ENCODE measurements at regions of chr21 and their contacts with region 1.

Region 1: GRCh38 chr21:38355992-38356797 is 99.4 kb downstream of the KCNJ15 start:
- DNase-seq: peak; percentile 84
- H3K4me3 Mint-ChIP-seq: no peak overlapping the region
- H3K27ac Mint-ChIP-seq: no peak overlapping the region
- H3K4me1 Mint-ChIP-seq: peaks cover 16% of the 10 kb centered on the region
- H3K27me3 Mint-ChIP-seq: peaks cover 2% of the 10 kb centered on the region

Region 2: GRCh38 chr21:37711836-37712568 is 644.2 kb before region 1 on chr21:
- CTCF ChIA-PET with region 1: interaction called, 5 read pairs
- intact Hi-C with region 1: loop called (anchors 5 kb)
- DNase-seq: peak; percentile 74
- H3K4me3 Mint-ChIP-seq: no peak overlapping the region
- H3K27ac Mint-ChIP-seq: no peak overlapping the region
- H3K4me1 Mint-ChIP-seq: no peaks in the 10 kb centered on the region
- H3K27me3 Mint-ChIP-seq: peaks cover 29% of the 10 kb centered on the region

Region 3: GRCh38 chr21:38170280-38170679 is 185.9 kb before region 1 on chr21:
- CTCF ChIA-PET with region 1: interaction called, 55 read pairs
- intact Hi-C with region 1: loop called (anchors 1 kb)
- DNase-seq: peak; percentile 41
- H3K4me3 Mint-ChIP-seq: no peak overlapping the region
- H3K27ac Mint-ChIP-seq: no peak overlapping the region
- H3K4me1 Mint-ChIP-seq: no peaks in the 10 kb centered on the region
- H3K27me3 Mint-ChIP-seq: no peaks in the 10 kb centered on the region

Region 4: DNA sequence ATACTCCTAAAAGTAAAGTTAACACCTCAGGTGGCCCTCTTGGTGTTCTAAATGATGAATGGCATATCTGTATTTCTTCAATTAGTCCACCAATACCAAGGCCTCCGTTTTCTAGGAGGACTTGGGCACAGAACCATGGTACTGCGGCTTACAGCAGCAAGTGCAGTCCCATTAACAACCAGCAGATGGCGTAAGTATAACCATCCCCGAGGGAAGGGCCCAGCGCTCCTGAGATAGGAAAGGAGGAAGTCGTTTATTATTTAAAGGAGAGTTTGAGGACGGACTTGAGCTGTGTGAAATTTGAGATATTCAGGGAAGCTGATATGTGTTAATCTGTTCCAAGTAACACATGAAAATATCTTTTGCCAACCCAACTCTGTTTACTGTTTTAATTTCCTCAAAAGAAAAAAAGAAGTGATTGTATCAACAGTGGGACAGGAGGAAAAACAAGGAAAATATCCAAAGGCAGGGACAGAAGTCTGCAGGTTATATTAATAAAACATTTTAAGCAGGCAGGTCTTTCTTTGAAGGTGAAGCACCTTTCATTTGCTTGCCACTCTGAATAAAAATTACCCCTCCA is 137.1 kb before region 1 on chr21:
- CTCF ChIA-PET with region 1: interaction called, 127 read pairs
- intact Hi-C with region 1: loop called (anchors 1 kb)
- DNase-seq: peak; percentile 78
- H3K4me3 Mint-ChIP-seq: no peak overlapping the region
- H3K27ac Mint-ChIP-seq: no peak overlapping the region
- H3K4me1 Mint-ChIP-seq: peaks cover 3% of the 10 kb centered on the region
- H3K27me3 Mint-ChIP-seq: no peaks in the 10 kb centered on the region

Region 5: DNA sequence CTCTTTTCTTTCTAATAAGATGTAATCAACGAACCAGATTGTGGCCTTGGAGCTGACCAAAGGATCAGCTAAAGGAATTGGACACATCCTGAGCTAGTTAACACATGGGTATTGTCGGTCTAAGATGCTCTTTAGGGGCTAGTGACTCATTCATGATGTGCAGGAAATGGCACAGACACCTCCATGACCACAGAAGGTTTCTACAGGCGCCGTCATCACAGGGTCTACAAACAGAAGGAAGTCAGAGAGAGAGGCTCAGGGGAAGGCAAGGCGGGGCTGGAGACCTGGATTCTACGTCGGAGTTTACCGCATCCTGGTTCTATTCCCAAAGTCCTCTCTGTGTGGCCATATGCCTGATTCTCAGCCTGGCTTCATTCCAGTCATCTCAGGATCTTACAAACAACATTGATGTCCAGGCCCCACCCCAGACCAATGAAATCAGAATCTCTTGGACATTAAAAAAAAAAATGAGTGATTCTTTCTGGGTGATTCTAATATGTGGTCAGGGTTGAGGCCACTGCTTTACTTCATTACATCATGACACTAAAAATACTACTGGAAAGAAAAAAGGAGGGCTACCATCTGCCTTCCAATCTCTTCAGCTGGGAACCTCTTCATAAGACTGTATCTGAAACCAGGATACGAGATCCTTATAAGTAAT is 111.2 kb before region 1 on chr21:
- CTCF ChIA-PET with region 1: interaction called, 10 read pairs
- intact Hi-C with region 1: no loop called
- DNase-seq: peak; percentile 89
- H3K4me3 Mint-ChIP-seq: peak overlapping the region; percentile 10
- H3K27ac Mint-ChIP-seq: peak overlapping the region; percentile 87
- H3K4me1 Mint-ChIP-seq: peaks cover 41% of the 10 kb centered on the region
- H3K27me3 Mint-ChIP-seq: no peaks in the 10 kb centered on the region

Region 6: DNA sequence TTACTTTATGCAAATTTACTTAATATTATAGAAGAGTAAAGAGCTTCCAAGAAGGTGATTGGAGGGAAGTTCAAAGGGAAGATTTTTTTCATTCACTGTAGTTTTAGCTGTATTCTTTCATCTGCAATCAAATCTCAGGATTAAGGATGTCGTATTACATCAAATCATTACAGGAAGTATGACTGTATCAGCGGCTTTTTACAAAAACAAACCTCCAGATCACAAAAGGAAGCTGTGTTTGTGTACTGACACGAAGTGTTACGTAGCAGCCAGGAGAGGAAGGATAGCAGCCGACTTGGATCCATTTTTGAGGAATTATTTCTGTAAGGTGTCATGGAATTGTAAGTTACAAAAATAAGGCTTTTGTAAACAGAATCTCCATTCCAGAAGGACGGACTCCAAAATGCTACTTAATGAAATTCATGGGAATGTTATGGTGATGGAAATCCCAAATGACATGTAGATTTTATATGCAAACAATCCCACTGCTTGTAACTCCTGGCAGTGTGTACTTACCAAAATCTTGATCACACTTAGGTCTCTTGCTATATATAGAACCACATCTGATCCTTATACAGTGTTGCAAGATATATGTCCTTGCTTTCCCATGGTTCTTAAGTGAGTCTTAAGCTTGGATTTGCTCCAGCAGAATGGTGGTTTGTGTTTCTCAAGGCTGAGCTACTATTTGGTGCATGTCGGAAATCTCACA is 49.6 kb before region 1 on chr21:
- CTCF ChIA-PET with region 1: interaction called, 15 read pairs
- intact Hi-C with region 1: no loop called
- DNase-seq: no peak
- H3K4me3 Mint-ChIP-seq: no peak overlapping the region
- H3K27ac Mint-ChIP-seq: no peak overlapping the region
- H3K4me1 Mint-ChIP-seq: peaks cover 23% of the 10 kb centered on the region
- H3K27me3 Mint-ChIP-seq: no peaks in the 10 kb centered on the region

Region 7: DNA sequence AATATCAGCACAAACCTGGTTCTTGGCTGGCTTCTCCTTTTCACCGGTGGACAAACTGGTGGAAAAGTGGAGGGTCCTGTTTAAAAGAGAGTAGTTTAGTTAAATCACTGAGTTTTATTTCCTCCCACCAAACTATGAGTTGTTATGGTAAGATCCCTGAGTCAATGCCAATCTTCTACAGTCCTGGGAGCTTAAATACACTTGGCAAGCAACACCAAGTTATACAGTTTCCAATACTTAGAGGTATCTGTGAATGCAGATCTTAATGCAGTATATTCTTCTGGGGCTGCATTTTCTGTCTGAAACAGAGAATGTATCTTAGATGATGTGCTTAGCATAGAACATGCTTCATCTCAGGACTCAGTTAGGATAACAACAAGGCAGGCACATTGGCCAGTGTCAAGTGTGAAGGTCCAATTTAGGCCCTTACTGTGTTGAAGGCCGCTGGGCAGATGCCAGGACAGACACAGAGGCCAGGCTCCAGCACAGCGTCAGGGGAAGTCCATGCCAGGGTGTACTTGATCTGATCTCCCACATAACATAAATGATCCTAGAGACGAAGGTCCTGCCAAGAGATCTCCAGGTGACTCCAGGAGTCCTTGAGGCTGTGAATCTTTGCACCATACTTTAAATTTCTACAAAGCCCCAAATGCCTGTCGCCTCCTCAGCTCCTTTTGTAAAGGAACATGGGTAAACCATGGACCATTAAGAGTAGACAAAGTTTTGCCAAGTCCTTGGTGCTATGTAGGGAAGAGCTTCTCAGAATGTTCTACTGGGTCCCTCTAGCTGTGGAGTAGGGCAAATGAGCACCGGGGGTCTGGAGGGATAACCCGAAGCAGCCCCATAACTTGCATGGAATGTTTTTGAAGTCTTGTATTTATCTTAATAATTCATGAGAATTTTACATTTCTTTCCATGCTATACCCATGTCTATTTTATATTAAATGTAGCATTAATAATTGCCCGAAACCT is 22.6 kb before region 1 on chr21:
- CTCF ChIA-PET with region 1: interaction called, 10 read pairs
- intact Hi-C with region 1: loop called (anchors 2 kb)
- DNase-seq: no peak
- H3K4me3 Mint-ChIP-seq: no peak overlapping the region
- H3K27ac Mint-ChIP-seq: no peak overlapping the region
- H3K4me1 Mint-ChIP-seq: no peaks in the 10 kb centered on the region
- H3K27me3 Mint-ChIP-seq: no peaks in the 10 kb centered on the region

Measured in activated naive CD4-positive, alpha-beta T cell treated with anti-CD3 and anti-CD28 coated beads for 36 hours (primary cell).